GM12878 (cell line): ENCODE measurements at regions of chr14 and their contacts with region 1.

Region 1: GRCh38 chr14:23327947-23328744 is 6.9 kb downstream of the PABPN1 start:
- DNase-seq: no peak
- ATAC-seq: peak; percentile 90
- H3K4me3 ChIP-seq: no peak overlapping the region
- H3K27ac ChIP-seq: no peak overlapping the region
- H3K4me1 ChIP-seq: peaks cover 1% of the 10 kb centered on the region; the same call in 1 of the 2 replicates
- H3K27me3 ChIP-seq: no peaks in the 10 kb centered on the region
- CTCF ChIP-seq: peak; percentile 79 to 83 (median 82)
- EP300 ChIP-seq: no peak
- POLR2A ChIP-seq: no peak
- RAD21 ChIP-seq: peak; percentile 77

Region 2: DNA sequence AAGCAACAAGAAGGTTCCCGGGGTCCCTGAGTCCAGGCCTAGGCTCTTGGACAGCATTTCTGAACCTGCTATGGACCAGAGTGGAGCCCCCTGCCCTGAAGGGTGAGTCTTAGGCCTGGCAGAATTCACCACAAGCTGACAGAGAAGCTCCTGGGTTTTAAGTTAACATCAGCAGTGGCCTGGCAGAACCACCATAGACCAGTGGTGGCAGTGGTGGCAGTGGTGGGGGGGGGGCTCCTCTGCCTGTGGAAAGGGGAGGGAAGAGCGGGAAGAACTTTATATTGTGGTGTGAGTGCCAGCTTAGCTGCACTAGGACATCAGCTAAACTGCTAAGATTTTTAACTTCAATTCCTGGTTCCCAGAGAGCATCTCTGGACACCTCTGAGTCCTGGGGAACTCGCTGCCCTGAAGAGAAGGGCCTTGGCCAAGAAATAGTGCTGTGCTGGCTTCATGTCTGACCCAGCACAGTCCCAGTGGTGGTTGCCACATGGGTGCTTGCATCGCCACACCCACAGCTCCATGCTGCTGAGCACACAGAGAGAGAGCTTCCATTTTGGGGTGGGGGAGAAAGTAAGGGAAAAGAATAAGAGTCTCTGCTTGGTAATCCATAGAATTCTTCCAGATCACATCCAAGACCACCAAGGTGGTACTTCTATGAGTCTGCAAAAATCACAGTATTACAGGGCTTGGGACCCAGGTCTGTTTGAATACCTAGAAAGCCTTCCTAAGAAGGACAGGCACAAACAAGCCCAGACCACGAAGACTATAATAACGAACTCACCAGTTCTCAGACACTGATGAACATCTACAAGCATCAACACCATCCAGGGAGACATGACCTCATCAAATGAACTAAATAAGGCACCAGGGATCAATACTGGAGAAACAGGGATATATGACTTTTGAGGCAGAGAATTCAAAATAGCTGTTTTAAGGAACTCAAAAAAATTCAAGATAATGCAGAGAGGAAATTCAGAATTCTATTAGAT is 110.8 kb before region 1 on chr14:
- CTCF ChIA-PET with region 1: no interaction called
- POLR2A ChIA-PET with region 1: no interaction called
- RAD21 ChIA-PET with region 1: no interaction called
- SMC1A ChIA-PET with region 1: no interaction called
- in situ Hi-C with region 1: no loop called
- intact Hi-C with region 1: no loop called
- DNase-seq: no peak
- ATAC-seq: no peak
- H3K4me3 ChIP-seq: no peak overlapping the region
- H3K27ac ChIP-seq: no peak overlapping the region
- H3K4me1 ChIP-seq: no peaks in the 10 kb centered on the region
- H3K27me3 ChIP-seq: no peaks in the 10 kb centered on the region
- CTCF ChIP-seq: no peak
- EP300 ChIP-seq: no peak
- POLR2A ChIP-seq: no peak
- RAD21 ChIP-seq: no peak

Region 3: DNA sequence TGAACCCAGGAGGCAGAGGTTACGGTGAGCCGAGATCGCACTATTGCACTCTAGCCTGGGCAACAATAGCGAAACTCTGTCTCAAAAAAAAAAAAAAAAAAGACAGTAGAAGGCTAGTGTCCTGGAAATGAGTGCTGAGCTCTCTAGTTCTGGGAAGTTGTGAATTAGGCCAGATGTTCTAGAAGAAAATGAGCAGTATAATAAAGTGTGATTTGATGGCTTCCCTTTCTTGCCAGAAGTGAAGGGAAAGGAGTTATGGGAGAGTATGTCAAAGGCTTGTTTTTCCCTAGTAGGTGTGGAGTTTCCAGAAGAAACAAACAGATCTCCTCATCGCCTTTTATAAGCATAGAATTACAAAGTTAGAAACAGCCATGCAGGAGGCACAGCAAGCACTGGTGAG is 69.9 kb before region 1 on chr14:
- CTCF ChIA-PET with region 1: no interaction called
- POLR2A ChIA-PET with region 1: no interaction called
- RAD21 ChIA-PET with region 1: no interaction called
- SMC1A ChIA-PET with region 1: no interaction called
- in situ Hi-C with region 1: no loop called
- intact Hi-C with region 1: no loop called
- DNase-seq: no peak
- ATAC-seq: no peak
- H3K4me3 ChIP-seq: no peak overlapping the region
- H3K27ac ChIP-seq: no peak overlapping the region
- H3K4me1 ChIP-seq: no peaks in the 10 kb centered on the region
- H3K27me3 ChIP-seq: no peaks in the 10 kb centered on the region
- CTCF ChIP-seq: no peak
- EP300 ChIP-seq: no peak
- POLR2A ChIP-seq: no peak
- RAD21 ChIP-seq: no peak

Region 4: GRCh38 chr14:23269193-23269592 is 59.0 kb before region 1 on chr14:
- CTCF ChIA-PET with region 1: interaction called, 14 read pairs
- POLR2A ChIA-PET with region 1: no interaction called
- RAD21 ChIA-PET with region 1: interaction called, 10 read pairs
- SMC1A ChIA-PET with region 1: interaction called, 13 read pairs
- in situ Hi-C with region 1: no loop called
- intact Hi-C with region 1: loop called (anchors 2 kb)
- DNase-seq: no peak
- ATAC-seq: no peak
- H3K4me3 ChIP-seq: no peak overlapping the region
- H3K27ac ChIP-seq: no peak overlapping the region
- H3K4me1 ChIP-seq: no peaks in the 10 kb centered on the region
- H3K27me3 ChIP-seq: no peaks in the 10 kb centered on the region
- CTCF ChIP-seq: no peak
- EP300 ChIP-seq: no peak
- POLR2A ChIP-seq: no peak
- RAD21 ChIP-seq: no peak

Region 5: GRCh38 chr14:23275412-23275811 is 52.7 kb before region 1 on chr14:
- CTCF ChIA-PET with region 1: interaction called, 10 read pairs
- POLR2A ChIA-PET with region 1: no interaction called
- RAD21 ChIA-PET with region 1: no interaction called
- SMC1A ChIA-PET with region 1: no interaction called
- in situ Hi-C with region 1: no loop called
- intact Hi-C with region 1: no loop called
- DNase-seq: no peak
- ATAC-seq: no peak
- H3K4me3 ChIP-seq: no peak overlapping the region
- H3K27ac ChIP-seq: no peak overlapping the region
- H3K4me1 ChIP-seq: no peaks in the 10 kb centered on the region
- H3K27me3 ChIP-seq: no peaks in the 10 kb centered on the region; a peak in 1 of 4 replicates
- CTCF ChIP-seq: no peak
- EP300 ChIP-seq: no peak
- POLR2A ChIP-seq: no peak
- RAD21 ChIP-seq: no peak

Region 6: GRCh38 chr14:23379366-23380196 is 51.4 kb after region 1 on chr14:
- CTCF ChIA-PET with region 1: interaction called, 34 read pairs
- POLR2A ChIA-PET with region 1: no interaction called
- RAD21 ChIA-PET with region 1: interaction called, 5 read pairs
- SMC1A ChIA-PET with region 1: interaction called, 9 read pairs
- in situ Hi-C with region 1: no loop called
- intact Hi-C with region 1: loop called (anchors 1 kb)
- DNase-seq: peak; percentile 3
- ATAC-seq: peak; percentile 96
- H3K4me3 ChIP-seq: no peak overlapping the region
- H3K27ac ChIP-seq: no peak overlapping the region
- H3K4me1 ChIP-seq: no peaks in the 10 kb centered on the region
- H3K27me3 ChIP-seq: no peaks in the 10 kb centered on the region; a peak in 1 of 4 replicates
- CTCF ChIP-seq: peak; percentile 92 to 97 (median 95); a peak in 5 of 6 replicates
- EP300 ChIP-seq: no peak
- POLR2A ChIP-seq: no peak
- RAD21 ChIP-seq: peak; percentile 87

Region 7: DNA sequence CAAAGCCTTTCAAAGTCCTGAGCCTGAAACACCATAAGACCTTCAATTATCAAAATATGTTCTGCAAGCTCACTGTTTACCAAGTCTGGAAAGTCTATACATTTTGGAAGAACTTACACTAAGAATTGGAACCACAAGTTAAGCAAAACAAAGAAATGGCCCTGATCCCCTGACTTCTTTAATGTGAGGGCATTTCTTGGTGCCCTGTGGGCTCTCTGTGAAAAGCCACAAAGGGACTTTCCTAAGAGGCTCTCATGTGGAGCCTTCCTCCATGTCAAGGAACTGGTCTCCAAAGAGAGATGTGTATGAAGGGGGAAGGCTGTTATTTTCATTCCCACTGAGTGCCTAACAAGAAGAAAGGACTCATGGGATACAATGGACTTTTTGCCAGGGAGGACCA is 93.4 kb after region 1 on chr14:
- CTCF ChIA-PET with region 1: no interaction called
- POLR2A ChIA-PET with region 1: no interaction called
- RAD21 ChIA-PET with region 1: no interaction called
- SMC1A ChIA-PET with region 1: no interaction called
- in situ Hi-C with region 1: no loop called
- intact Hi-C with region 1: no loop called
- DNase-seq: no peak
- ATAC-seq: peak; percentile 85
- H3K4me3 ChIP-seq: no peak overlapping the region
- H3K27ac ChIP-seq: no peak overlapping the region
- H3K4me1 ChIP-seq: no peaks in the 10 kb centered on the region
- H3K27me3 ChIP-seq: no peaks in the 10 kb centered on the region; a peak in 1 of 4 replicates
- CTCF ChIP-seq: no peak
- EP300 ChIP-seq: no peak
- POLR2A ChIP-seq: no peak
- RAD21 ChIP-seq: no peak

Region 8: GRCh38 chr14:23469127-23469905 is 141.2 kb after region 1 on chr14 and contains the start of gene NGDN:
- CTCF ChIA-PET with region 1: interaction called, 10 read pairs
- POLR2A ChIA-PET with region 1: no interaction called
- RAD21 ChIA-PET with region 1: no interaction called
- SMC1A ChIA-PET with region 1: interaction called, 4 read pairs
- in situ Hi-C with region 1: no loop called
- intact Hi-C with region 1: loop called (anchors 5 kb)
- DNase-seq: peak; percentile 100
- ATAC-seq: peak; percentile 99
- H3K4me3 ChIP-seq: peak within 1 kb of the TSS; percentile 88
- H3K27ac ChIP-seq: peak within 1 kb of the TSS; percentile 72
- H3K4me1 ChIP-seq: peaks cover 8% of the 10 kb centered on the region
- H3K27me3 ChIP-seq: no peaks in the 10 kb centered on the region
- CTCF ChIP-seq: peak; percentile 54 to 82 (median 73)
- EP300 ChIP-seq: no peak
- POLR2A ChIP-seq: peak; percentile 84
- RAD21 ChIP-seq: peak; percentile 13; the same call in 1 of the 2 replicates
- polyA plus RNA-seq, gene NGDN: 146 to 163 TPM